ENCODE measurements at regions of chr20 and their contacts with region 1.

Region 1: DNA sequence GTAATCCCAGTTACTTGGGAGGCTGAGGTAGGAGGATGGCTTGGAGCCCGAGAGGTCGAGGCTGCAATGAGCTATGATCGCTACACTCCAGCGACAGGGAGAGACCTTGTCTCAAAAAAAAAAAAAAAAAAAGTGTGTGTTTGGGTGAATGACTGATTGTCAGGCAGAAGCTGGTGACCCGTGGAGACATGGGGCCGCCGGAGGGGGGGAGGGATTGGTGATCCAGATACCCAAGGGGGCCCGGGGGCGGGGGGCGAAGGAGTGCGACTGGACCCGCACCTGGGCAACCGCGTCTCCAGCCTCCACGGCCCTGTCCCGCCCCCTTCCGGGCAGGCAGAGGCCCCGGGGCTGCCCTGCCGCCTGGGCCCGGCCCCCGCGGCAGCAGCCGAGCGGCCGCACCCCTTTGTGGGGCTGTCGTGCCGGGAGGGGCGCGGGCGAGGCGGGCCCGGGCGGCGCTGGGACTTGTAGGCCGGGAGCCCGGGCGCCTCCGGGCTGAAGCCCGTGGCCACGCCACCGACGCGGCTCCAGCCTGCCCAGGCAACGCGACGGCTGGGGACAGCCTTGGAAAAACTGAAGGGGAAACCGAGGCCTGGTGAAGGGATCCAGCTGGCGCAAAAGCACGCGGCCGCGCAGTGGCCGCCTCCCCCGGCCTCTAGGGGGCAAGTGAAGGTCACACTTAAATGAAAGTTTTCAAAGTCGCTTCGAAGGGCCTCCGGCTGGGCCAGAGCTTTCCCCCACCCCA is 2.1 kb upstream of the RBM38 start:
- DNase-seq: peak; percentile 81 to 89 (median 85)
- ATAC-seq: peak; percentile 83
- H3K4me3 ChIP-seq: no peak overlapping the region
- H3K27ac ChIP-seq: peak overlapping the region in 3 of 4 donors; percentile 33 to 66 (median 57)
- H3K4me1 ChIP-seq: peaks cover 33% of the 10 kb centered on the region
- H3K27me3 ChIP-seq: no peaks in the 10 kb centered on the region
- CTCF ChIP-seq: peak in 3 of 7 experiments; percentile 21 to 44 (median 29)
- POLR2A ChIP-seq: peak; percentile 18 to 49 (median 47)

Region 2: DNA sequence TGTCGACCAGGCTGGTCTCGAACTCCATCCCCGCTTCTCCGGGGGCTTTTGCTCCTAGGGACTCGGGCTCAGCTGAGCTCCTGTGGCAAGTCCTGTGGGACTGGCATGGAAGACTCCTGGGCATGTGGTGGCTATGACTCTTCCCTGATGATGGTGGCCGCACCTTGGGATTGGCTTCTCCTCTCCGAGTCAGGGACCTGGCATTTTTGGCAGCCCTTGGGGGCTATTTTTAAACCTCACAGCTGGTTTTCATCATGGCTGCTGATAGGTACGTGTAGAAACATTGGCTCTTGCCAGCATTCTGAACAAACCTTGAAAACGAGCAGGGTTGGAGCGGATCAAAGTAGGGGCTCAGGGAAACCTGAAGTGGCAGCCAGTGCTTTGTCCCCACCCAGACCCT is 56.2 kb after region 1 on chr20:
- intact Hi-C with region 1: loop called (anchors 5 kb)
- DNase-seq: no peak
- ATAC-seq: no peak
- H3K4me3 ChIP-seq: no peak overlapping the region
- H3K27ac ChIP-seq: no peak overlapping the region
- H3K4me1 ChIP-seq: peaks cover 28% of the 10 kb centered on the region
- H3K27me3 ChIP-seq: no peaks in the 10 kb centered on the region
- CTCF ChIP-seq: no peak
- POLR2A ChIP-seq: no peak